WTC11 (cell line): ENCODE measurements at regions of chr5 and their contacts with region 1.

Region 1: GRCh38 chr5:52948418-52949076 is 40.6 kb upstream of the ITGA2 start:
- DNase-seq: peak; percentile 60
- ATAC-seq: peak; percentile 97
- H3K4me3 Mint-ChIP-seq: no peak overlapping the region
- H3K27ac Mint-ChIP-seq: no peak overlapping the region
- H3K4me1 Mint-ChIP-seq: no peaks in the 10 kb centered on the region
- H3K27me3 Mint-ChIP-seq: no peaks in the 10 kb centered on the region
- CTCF ChIP-seq: peak; percentile 51; the same call in 1 of the 2 replicates

Region 2: GRCh38 chr5:52799983-52800393 is 148.6 kb before region 1 on chr5:
- CTCF ChIA-PET with region 1: no interaction called
- POLR2A ChIA-PET with region 1: no interaction called
- DNase-seq: peak; percentile 94
- ATAC-seq: peak; percentile 76
- H3K4me3 Mint-ChIP-seq: peak overlapping the region; percentile 91
- H3K27ac Mint-ChIP-seq: peak overlapping the region; percentile 99
- H3K4me1 Mint-ChIP-seq: peaks cover 57% of the 10 kb centered on the region
- H3K27me3 Mint-ChIP-seq: no peaks in the 10 kb centered on the region
- CTCF ChIP-seq: no peak

Region 3: GRCh38 chr5:53095931-53096525 is 147.5 kb after region 1 on chr5:
- CTCF ChIA-PET with region 1: interaction called, 42 read pairs
- POLR2A ChIA-PET with region 1: no interaction called
- DNase-seq: peak; percentile 60
- ATAC-seq: peak; percentile 39; the same call in 1 of the 2 replicates
- H3K4me3 Mint-ChIP-seq: no peak overlapping the region
- H3K27ac Mint-ChIP-seq: no peak overlapping the region
- H3K4me1 Mint-ChIP-seq: no peaks in the 10 kb centered on the region
- H3K27me3 Mint-ChIP-seq: no peaks in the 10 kb centered on the region
- CTCF ChIP-seq: peak; percentile 73

Region 4: GRCh38 chr5:53109443-53110127 is 161.0 kb after region 1 on chr5 and contains the start of gene MOCS2:
- CTCF ChIA-PET with region 1: interaction called, 33 read pairs
- POLR2A ChIA-PET with region 1: no interaction called
- DNase-seq: peak; percentile 86
- ATAC-seq: peak; percentile 96
- H3K4me3 Mint-ChIP-seq: peak within 1 kb of the TSS; percentile 89
- H3K27ac Mint-ChIP-seq: peak within 1 kb of the TSS; percentile 95
- H3K4me1 Mint-ChIP-seq: peaks cover 17% of the 10 kb centered on the region
- H3K27me3 Mint-ChIP-seq: peaks cover 5% of the 10 kb centered on the region; the same call in 1 of the 2 replicates
- CTCF ChIP-seq: no peak
- total RNA-seq, gene MOCS2: 14.4 to 16.1 TPM (median 15.7 TPM) in 3 replicates

Region 5: GRCh38 chr5:53114988-53115387 is 166.4 kb after region 1 on chr5:
- CTCF ChIA-PET with region 1: interaction called, 33 read pairs
- POLR2A ChIA-PET with region 1: no interaction called
- DNase-seq: no peak
- ATAC-seq: no peak
- H3K4me3 Mint-ChIP-seq: no peak overlapping the region
- H3K27ac Mint-ChIP-seq: no peak overlapping the region
- H3K4me1 Mint-ChIP-seq: peaks cover 18% of the 10 kb centered on the region
- H3K27me3 Mint-ChIP-seq: no peaks in the 10 kb centered on the region; the same call in 1 of the 2 replicates
- CTCF ChIP-seq: no peak